Activated CD4-positive, alpha-beta memory T cell treated with anti-CD3 and anti-CD28 coated beads, Interleukin-2, amount 10 ng/mL, durations not matched to agents 7 days and 5 days (primary cell): ENCODE measurements at regions of chr19 and their contacts with region 1.

Region 1: GRCh38 chr19:38769635-38770211 is 3.6 kb downstream of the LGALS7 start:
- DNase-seq: peak; percentile 93
- H3K4me3 Mint-ChIP-seq: peak overlapping the region; percentile 52
- H3K27ac Mint-ChIP-seq: peak overlapping the region; percentile 70
- H3K4me1 Mint-ChIP-seq: peaks cover 12% of the 10 kb centered on the region
- H3K27me3 Mint-ChIP-seq: peaks cover 2% of the 10 kb centered on the region

Region 2: DNA sequence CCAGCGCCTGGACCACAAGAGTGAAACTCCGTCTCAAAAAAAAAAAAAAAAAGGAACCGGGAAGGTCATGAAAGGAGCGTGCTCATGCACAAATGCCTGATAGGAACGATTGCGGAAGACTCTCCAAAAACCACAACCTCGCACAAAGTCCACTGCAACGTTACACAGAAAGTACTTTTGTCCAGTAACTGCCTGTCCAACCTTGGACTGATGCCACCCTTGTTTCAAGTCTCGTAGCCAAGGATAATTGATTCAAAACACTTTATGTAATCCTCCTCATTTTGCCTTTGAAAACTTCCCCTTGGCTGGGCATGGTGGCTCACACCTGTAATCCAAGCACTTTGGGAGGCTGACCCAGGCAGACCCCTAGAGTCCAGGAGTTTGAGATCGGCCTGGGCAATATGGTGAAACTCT is 10.1 kb before region 1 on chr19:
- CTCF ChIA-PET with region 1: interaction called, 11 read pairs
- POLR2A ChIA-PET with region 1: no interaction called
- DNase-seq: no peak
- H3K4me3 Mint-ChIP-seq: no peak overlapping the region
- H3K27ac Mint-ChIP-seq: no peak overlapping the region
- H3K4me1 Mint-ChIP-seq: no peaks in the 10 kb centered on the region
- H3K27me3 Mint-ChIP-seq: peaks cover 2% of the 10 kb centered on the region